ENCODE measurements at regions of chr7 and their contacts with region 1.

Region 1: DNA sequence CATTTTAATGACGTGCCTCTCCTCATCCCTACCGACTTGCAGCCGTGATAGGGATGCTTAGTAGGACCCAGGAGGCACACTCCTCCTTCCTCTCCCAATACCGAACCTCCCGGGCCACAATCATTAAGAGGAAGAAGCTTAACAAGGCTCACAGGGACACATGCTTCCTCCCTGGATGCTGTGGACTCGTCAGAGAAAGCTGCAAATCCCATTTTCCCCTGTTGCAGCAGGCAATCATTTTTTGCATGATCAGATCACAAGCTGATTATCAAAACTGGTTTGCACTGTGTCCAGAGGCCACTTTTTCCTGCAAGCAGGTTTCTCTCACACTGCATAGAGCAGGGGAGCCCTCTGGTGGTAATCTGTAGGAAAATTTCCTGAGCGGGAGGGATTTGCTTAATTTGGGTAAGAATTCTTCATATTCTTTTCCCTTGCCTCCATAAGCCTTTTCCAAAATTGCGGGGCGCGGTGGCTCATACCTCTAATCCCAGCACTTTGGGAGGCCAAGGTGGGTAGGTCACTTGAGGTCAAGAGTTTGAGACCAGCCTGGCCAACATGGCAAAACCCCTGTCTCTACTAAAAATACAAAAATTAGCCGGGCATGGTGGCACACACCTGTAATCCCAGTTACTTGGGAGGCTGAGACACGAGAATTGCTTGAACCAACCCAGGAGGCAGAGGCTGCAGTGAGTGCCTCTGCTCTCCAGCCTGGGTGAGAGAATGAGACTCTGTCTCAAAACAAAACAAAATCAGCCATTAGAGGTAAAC is 16.1 kb upstream of the LAMB4 start:
- DNase-seq: peak; percentile 81 to 82
- H3K4me3 ChIP-seq: no peak overlapping the region
- H3K4me3 Mint-ChIP-seq: no peak overlapping the region
- H3K27ac Mint-ChIP-seq: no peak overlapping the region
- H3K4me1 ChIP-seq: peaks cover 16% of the 10 kb centered on the region
- H3K4me1 Mint-ChIP-seq: peaks cover 15% of the 10 kb centered on the region
- H3K27me3 ChIP-seq: no peaks in the 10 kb centered on the region
- H3K27me3 Mint-ChIP-seq: no peaks in the 10 kb centered on the region
- CTCF ChIP-seq: peak; percentile 93 to 97

Region 2: GRCh38 chr7:107966711-107967110 is 179.5 kb before region 1 on chr7:
- CTCF ChIA-PET with region 1: no interaction called
- POLR2A ChIA-PET with region 1: no interaction called
- intact Hi-C with region 1: loop called (anchors 2 kb)
- DNase-seq: peak; percentile 55 to 61
- H3K4me3 ChIP-seq: no peak overlapping the region
- H3K4me3 Mint-ChIP-seq: no peak overlapping the region
- H3K27ac Mint-ChIP-seq: no peak overlapping the region
- H3K4me1 ChIP-seq: peaks cover 43% of the 10 kb centered on the region
- H3K4me1 Mint-ChIP-seq: no peaks in the 10 kb centered on the region
- H3K27me3 ChIP-seq: no peaks in the 10 kb centered on the region
- H3K27me3 Mint-ChIP-seq: no peaks in the 10 kb centered on the region
- CTCF ChIP-seq: peak in 1 of 2 experiments; percentile 1

Region 3: GRCh38 chr7:108002726-108003598 is 143.3 kb before region 1 on chr7 and contains the start of gene LAMB1:
- CTCF ChIA-PET with region 1: interaction called, 5 read pairs
- POLR2A ChIA-PET with region 1: no interaction called
- intact Hi-C with region 1: loop called (anchors 2 kb)
- DNase-seq: peak; percentile 93 to 94
- H3K4me3 ChIP-seq: peak within 1 kb of the TSS; percentile 94
- H3K4me3 Mint-ChIP-seq: peak within 1 kb of the TSS; percentile 79
- H3K27ac Mint-ChIP-seq: peak within 1 kb of the TSS; percentile 83
- H3K4me1 ChIP-seq: peaks cover 70% of the 10 kb centered on the region
- H3K4me1 Mint-ChIP-seq: peaks cover 38% of the 10 kb centered on the region
- H3K27me3 ChIP-seq: no peaks in the 10 kb centered on the region
- H3K27me3 Mint-ChIP-seq: no peaks in the 10 kb centered on the region
- CTCF ChIP-seq: no peak
- total RNA-seq, gene LAMB1: 418 and 431 TPM in 2 replicates

Region 4: GRCh38 chr7:108114117-108114841 is 32.0 kb before region 1 on chr7:
- CTCF ChIA-PET with region 1: interaction called, 28 read pairs
- POLR2A ChIA-PET with region 1: no interaction called
- intact Hi-C with region 1: loop called (anchors 1 kb)
- DNase-seq: peak; percentile 60 to 67
- H3K4me3 ChIP-seq: no peak overlapping the region
- H3K4me3 Mint-ChIP-seq: no peak overlapping the region
- H3K27ac Mint-ChIP-seq: no peak overlapping the region
- H3K4me1 ChIP-seq: peaks cover 3% of the 10 kb centered on the region
- H3K4me1 Mint-ChIP-seq: peaks cover 4% of the 10 kb centered on the region
- H3K27me3 ChIP-seq: no peaks in the 10 kb centered on the region
- H3K27me3 Mint-ChIP-seq: no peaks in the 10 kb centered on the region
- CTCF ChIP-seq: peak; percentile 79 to 80

Region 5: GRCh38 chr7:108299291-108299898 is 153.1 kb after region 1 on chr7:
- CTCF ChIA-PET with region 1: no interaction called
- POLR2A ChIA-PET with region 1: no interaction called
- intact Hi-C with region 1: no loop called
- DNase-seq: peak in 1 of 2 experiments; percentile 40
- H3K4me3 ChIP-seq: no peak overlapping the region
- H3K4me3 Mint-ChIP-seq: peak overlapping the region; percentile 48
- H3K27ac Mint-ChIP-seq: peak overlapping the region; percentile 82
- H3K4me1 ChIP-seq: peaks cover 11% of the 10 kb centered on the region
- H3K4me1 Mint-ChIP-seq: peaks cover 32% of the 10 kb centered on the region
- H3K27me3 ChIP-seq: no peaks in the 10 kb centered on the region
- H3K27me3 Mint-ChIP-seq: no peaks in the 10 kb centered on the region
- CTCF ChIP-seq: no peak